ENCODE measurements at regions of chr1 and their contacts with region 1.

Region 1: DNA sequence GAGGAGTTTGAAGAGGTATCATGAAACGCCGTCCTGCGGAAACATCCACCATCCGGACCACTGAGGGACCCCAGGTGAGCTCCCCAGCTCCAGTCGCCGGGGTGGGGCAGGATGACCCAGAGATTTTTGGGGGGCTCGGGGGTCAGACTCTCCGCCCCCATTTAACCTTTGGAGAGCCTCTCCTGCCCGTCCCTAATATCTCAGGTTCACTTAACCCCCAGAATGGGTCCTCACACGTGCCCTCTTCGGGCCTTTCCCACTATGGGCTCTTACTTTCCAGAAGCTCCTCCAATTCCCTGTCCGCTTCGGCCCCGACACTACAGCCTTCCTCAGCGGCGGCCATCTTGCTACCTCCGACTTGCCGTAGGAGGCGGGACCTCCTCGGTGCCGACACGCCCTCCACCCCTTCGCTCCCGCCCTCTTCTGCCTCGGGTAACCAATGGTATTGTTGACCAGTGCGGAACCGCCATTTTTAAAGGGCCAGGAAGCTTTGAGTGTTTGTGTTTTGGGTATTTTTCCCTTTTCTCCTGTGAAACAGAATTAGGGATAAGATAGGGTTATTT is at the start of gene PEX19:
- DNase-seq: peak; percentile 96
- ATAC-seq: peak; percentile 100
- H3K4me3 Mint-ChIP-seq: peak within 1 kb of the TSS; percentile 96
- H3K27ac Mint-ChIP-seq: peak within 1 kb of the TSS; percentile 92
- H3K4me1 Mint-ChIP-seq: peaks cover 20% of the 10 kb centered on the region
- H3K27me3 Mint-ChIP-seq: no peaks in the 10 kb centered on the region
- total RNA-seq, gene PEX19: 42.3 to 42.7 TPM

Region 2: GRCh38 chr1:160149716-160150115 is 135.1 kb before region 1 on chr1:
- CTCF ChIA-PET with region 1: no interaction called
- POLR2A ChIA-PET with region 1: no interaction called
- DNase-seq: no peak
- ATAC-seq: no peak
- H3K4me3 Mint-ChIP-seq: no peak overlapping the region
- H3K27ac Mint-ChIP-seq: no peak overlapping the region
- H3K4me1 Mint-ChIP-seq: no peaks in the 10 kb centered on the region
- H3K27me3 Mint-ChIP-seq: peaks cover 2% of the 10 kb centered on the region

Region 3: DNA sequence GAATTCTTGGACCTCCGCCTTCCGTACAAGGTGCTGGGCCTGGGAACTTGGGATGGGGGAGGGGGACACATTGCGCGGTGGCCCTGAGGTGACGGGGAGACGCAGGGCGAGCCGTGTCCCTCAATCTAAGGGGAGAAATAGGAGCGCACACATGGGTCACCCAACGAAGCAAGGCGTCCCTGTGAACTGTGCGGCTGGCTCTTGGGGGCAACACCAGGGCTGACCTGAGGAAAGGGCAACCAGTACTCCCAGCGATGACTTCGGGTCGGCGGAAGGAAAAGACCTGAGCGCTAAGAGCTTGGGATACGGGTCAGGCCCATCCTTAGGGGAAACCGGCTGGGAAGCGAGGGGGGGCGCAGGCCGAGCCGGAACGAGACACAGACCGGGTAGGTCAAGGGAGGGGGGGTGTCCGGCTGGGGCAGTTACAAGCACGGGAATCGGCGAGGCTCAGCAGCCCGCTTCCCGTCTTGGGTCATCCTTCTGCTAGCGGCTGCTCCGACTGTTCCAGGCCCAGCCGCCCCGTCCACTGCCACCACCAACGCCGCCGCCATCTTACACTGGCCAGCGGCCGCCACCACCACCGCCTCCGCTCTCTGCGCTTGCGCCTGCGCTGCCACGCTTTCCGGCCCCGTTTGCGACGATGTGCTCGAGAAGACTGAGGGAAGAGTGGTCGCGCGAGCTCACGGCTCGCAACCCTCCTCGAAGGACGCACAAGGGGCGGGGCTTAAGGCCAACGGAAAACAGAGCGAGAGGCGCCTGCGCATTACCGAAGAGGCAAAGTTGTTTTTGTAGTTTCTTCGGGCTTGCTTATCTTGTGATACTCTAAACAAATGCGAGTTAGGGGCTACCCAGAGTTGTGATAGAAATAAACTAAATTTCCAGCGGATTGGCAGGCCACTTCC is 22.7 kb before region 1 on chr1 and contains the start of gene DCAF8:
- CTCF ChIA-PET with region 1: interaction called, 5 read pairs
- POLR2A ChIA-PET with region 1: interaction called, 38 read pairs
- DNase-seq: peak; percentile 99
- ATAC-seq: peak; percentile 92
- H3K4me3 Mint-ChIP-seq: peak within 1 kb of the TSS; percentile 96
- H3K27ac Mint-ChIP-seq: peak within 1 kb of the TSS; percentile 95
- H3K4me1 Mint-ChIP-seq: peaks cover 33% of the 10 kb centered on the region
- H3K27me3 Mint-ChIP-seq: no peaks in the 10 kb centered on the region
- total RNA-seq, gene DCAF8: 81.9 to 85.9 TPM

Measured in activated CD8-positive, alpha-beta T cell treated with anti-CD3 and anti-CD28 coated beads, Interleukin-2, amount 10 ng/mL, durations not matched to agents 7 days and 5 days (primary cell).